ENCODE measurements at regions of chr10 and their contacts with region 1.

Region 1: GRCh38 chr10:72248468-72249151 is 25.1 kb upstream of the DDIT4 start:
- DNase-seq: peak; percentile 47 to 90 (median 72)
- ATAC-seq: peak; percentile 86 to 92 (median 90)
- H3K4me3 ChIP-seq: peak overlapping the region; percentile 36 to 75
- H3K4me3 Mint-ChIP-seq: peak overlapping the region; percentile 68 to 77 (median 77)
- H3K27ac ChIP-seq: peak overlapping the region; percentile 78
- H3K27ac Mint-ChIP-seq: peak overlapping the region; percentile 94 to 97
- H3K4me1 ChIP-seq: peaks cover 68 to 99% of the 10 kb centered on the region in 2 experiments
- H3K4me1 Mint-ChIP-seq: peaks cover 87 to 88% (median 88%) of the 10 kb centered on the region in 3 donors
- H3K27me3 ChIP-seq: no peaks in the 10 kb centered on the region
- H3K27me3 Mint-ChIP-seq: no peaks in the 10 kb centered on the region

Region 2: GRCh38 chr10:71371750-71372166 is 876.9 kb before region 1 on chr10:
- CTCF ChIA-PET with region 1: no interaction called
- POLR2A ChIA-PET with region 1: no interaction called
- DNase-seq: no peak
- ATAC-seq: no peak
- H3K4me3 ChIP-seq: no peak overlapping the region
- H3K4me3 Mint-ChIP-seq: no peak overlapping the region
- H3K27ac ChIP-seq: no peak overlapping the region
- H3K27ac Mint-ChIP-seq: no peak overlapping the region
- H3K4me1 ChIP-seq: peaks cover 0 to 2% of the 10 kb centered on the region in 2 experiments
- H3K4me1 Mint-ChIP-seq: peaks cover 0 to 7% (median 0%) of the 10 kb centered on the region in 3 donors
- H3K27me3 ChIP-seq: peaks cover 0 to 18% of the 10 kb centered on the region in 2 experiments
- H3K27me3 Mint-ChIP-seq: peaks cover 5 to 11% of the 10 kb centered on the region in 2 donors

Region 3: GRCh38 chr10:72175166-72175565 is 73.4 kb before region 1 on chr10:
- CTCF ChIA-PET with region 1: no interaction called
- POLR2A ChIA-PET with region 1: no interaction called
- DNase-seq: no peak
- ATAC-seq: no peak
- H3K4me3 ChIP-seq: no peak overlapping the region
- H3K4me3 Mint-ChIP-seq: no peak overlapping the region
- H3K27ac ChIP-seq: no peak overlapping the region
- H3K27ac Mint-ChIP-seq: no peak overlapping the region
- H3K4me1 ChIP-seq: peaks cover 0 to 3% of the 10 kb centered on the region in 2 experiments
- H3K4me1 Mint-ChIP-seq: peaks cover 7 to 14% (median 10%) of the 10 kb centered on the region in 3 donors
- H3K27me3 ChIP-seq: no peaks in the 10 kb centered on the region
- H3K27me3 Mint-ChIP-seq: no peaks in the 10 kb centered on the region

Region 4: GRCh38 chr10:72273410-72274212 is 25.0 kb after region 1 on chr10 and contains the start of gene DDIT4:
- CTCF ChIA-PET with region 1: interaction called, 4 to 14 read pairs
- POLR2A ChIA-PET with region 1: interaction called in 1 of 2 experiments, 7 read pairs
- DNase-seq: peak; percentile 88 to 99 (median 98)
- ATAC-seq: peak; percentile 89 to 95 (median 93)
- H3K4me3 ChIP-seq: peak within 1 kb of the TSS; percentile 87 to 95
- H3K4me3 Mint-ChIP-seq: peak within 1 kb of the TSS; percentile 92 to 99 (median 92)
- H3K27ac ChIP-seq: peak within 1 kb of the TSS; percentile 88
- H3K27ac Mint-ChIP-seq: peak within 1 kb of the TSS; percentile 93
- H3K4me1 ChIP-seq: peaks cover 7 to 48% of the 10 kb centered on the region in 2 experiments
- H3K4me1 Mint-ChIP-seq: peaks cover 45 to 58% (median 50%) of the 10 kb centered on the region in 3 donors
- H3K27me3 ChIP-seq: no peaks in the 10 kb centered on the region
- H3K27me3 Mint-ChIP-seq: no peaks in the 10 kb centered on the region
- total RNA-seq, gene DDIT4: 39.9 to 326 (median 52.1) TPM

Region 5: DNA sequence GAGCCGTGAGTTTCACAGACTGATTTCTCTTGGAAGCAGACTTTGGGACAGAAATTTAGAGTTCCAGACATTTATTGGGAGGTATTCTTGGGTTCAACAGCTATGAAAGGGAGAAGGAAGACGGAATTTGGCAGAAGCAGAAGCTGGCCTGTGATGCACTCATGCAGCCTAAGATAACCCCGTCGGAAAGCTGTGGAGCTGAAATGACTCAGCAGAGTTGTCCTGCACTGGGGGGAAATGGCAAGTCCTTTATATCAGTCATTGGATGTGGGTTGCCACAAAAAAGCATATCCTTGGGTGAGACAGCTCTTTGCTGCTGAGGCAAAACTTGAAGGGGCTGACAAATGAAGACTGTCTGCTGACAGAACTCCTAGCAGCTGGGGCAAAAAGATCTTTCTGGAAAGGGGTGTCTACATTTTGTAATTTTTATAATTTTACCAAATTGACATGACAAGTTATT is 388.8 kb after region 1 on chr10:
- CTCF ChIA-PET with region 1: no interaction called
- POLR2A ChIA-PET with region 1: interaction called in 1 of 2 experiments, 10 read pairs
- DNase-seq: peak in 6 of 35 experiments; percentile 0 to 19 (median 2)
- ATAC-seq: peak in 1 of 4 experiments; percentile 43
- H3K4me3 ChIP-seq: no peak overlapping the region
- H3K4me3 Mint-ChIP-seq: no peak overlapping the region
- H3K27ac ChIP-seq: no peak overlapping the region
- H3K27ac Mint-ChIP-seq: no peak overlapping the region
- H3K4me1 ChIP-seq: no peaks in the 10 kb centered on the region
- H3K4me1 Mint-ChIP-seq: peaks cover 0 to 1% (median 0%) of the 10 kb centered on the region in 3 donors
- H3K27me3 ChIP-seq: no peaks in the 10 kb centered on the region
- H3K27me3 Mint-ChIP-seq: peaks cover 0 to 6% of the 10 kb centered on the region in 2 donors

Measured in T-cell (primary cell).